Activated T-helper 1 cell treated with anti-CD3 and anti-CD28 coated beads, Interleukin-12 subunit alpha, Interleukin-12 subunit beta, Interleukin-2, Interleukin-4 antibody, amounts not matched to agents 30 ng/mL and 10 ng/mL and 1 ng/mL, durations not matched to agents 14 hours and 24 hours and 36 hours (primary cell): ENCODE measurements at regions of chr16 and their contacts with region 1.

Region 1: DNA sequence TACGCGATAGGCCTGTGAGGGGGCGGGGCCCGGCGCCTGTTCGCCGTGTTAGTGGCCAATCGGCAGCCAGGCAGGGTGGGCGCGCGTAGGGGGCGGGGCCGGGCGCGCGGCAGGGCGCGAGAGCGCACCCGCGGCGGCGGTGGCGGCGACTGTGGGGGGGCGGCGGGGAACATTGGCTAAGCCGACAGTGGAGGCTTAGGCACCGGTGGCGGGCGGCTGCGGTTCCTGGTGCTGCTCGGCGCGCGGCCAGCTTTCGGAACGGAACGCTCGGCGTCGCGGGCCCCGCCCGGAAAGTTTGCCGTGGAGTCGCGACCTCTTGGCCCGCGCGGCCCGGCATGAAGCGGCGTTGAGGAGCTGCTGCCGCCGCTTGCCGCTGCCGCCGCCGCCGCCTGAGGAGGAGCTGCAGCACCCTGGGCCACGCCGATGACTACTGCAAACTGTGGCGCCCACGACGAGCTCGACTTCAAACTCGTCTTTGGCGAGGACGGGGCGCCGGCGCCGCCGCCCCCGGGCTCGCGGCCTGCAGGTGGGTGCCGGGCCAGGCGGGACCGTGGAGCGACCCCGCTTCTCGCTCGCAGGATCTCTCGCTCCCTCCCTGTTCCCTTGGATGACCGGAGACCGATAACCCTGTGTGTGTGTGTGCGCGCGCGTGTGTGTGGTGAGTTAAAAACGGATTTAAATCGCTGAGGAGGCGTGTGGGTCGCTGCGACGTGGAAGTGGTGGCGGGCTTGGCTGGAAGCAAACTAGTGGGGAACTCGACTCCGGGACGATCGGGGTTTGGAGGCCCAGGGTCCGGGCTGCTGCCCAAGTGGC is at the start of gene NFATC3:
- DNase-seq: peak; percentile 97
- H3K4me3 Mint-ChIP-seq: peak within 1 kb of the TSS; percentile 95
- H3K27ac Mint-ChIP-seq: peak within 1 kb of the TSS; percentile 96
- H3K4me1 Mint-ChIP-seq: peaks cover 73% of the 10 kb centered on the region
- H3K27me3 Mint-ChIP-seq: no peaks in the 10 kb centered on the region
- total RNA-seq, gene NFATC3: 152 and 157 TPM in 2 replicates

Region 2: DNA sequence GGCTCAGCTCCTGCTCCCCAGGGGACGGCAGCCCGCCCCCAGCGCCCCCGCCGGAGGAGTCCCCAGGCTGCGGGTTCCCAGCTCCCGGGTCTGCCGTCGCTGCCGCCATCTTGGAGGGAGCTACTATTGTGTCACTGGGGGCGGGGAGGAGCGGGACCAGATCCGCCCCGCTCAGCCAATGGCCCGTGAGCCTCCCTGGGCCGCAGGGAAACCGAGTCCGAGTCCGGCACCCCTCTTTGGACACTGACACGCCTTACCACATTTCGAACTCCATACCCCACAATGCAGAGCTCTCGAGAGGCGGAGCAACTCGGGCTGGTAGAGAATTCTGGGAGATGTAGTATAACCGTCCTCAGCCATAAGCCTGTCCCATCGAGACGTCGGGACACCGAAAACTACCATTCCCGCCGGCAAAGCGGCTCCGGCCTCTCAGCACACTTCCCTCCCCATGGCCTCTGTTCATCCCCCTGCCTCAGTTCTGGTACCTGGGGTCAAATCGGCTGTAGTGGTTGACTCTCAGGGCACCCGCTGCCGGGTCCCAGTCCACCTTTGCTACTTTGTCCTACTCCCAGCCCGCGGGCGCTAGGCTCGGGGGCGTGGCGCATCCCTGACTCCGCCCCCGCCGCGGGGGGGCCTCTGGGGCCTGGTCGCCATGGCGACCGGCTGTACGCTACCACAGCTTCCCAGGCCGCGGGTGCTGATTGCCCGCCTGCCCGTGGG is 278.9 kb before region 1 on chr16 and contains the starts of genes RANBP10 and TSNAXIP1:
- intact Hi-C with region 1: loop called (anchors 1 kb)
- DNase-seq: peak; percentile 96
- H3K4me3 Mint-ChIP-seq: peak within 1 kb of the TSS; percentile 90
- H3K27ac Mint-ChIP-seq: peak within 1 kb of the TSS; percentile 86
- H3K4me1 Mint-ChIP-seq: peaks cover 35% of the 10 kb centered on the region
- H3K27me3 Mint-ChIP-seq: peaks cover 3% of the 10 kb centered on the region
- total RNA-seq, gene RANBP10: 23.0 and 25.7 TPM in 2 replicates
- total RNA-seq, gene TSNAXIP1: 0.52 and 0.83 TPM in 2 replicates

Region 3: GRCh38 chr16:68022704-68023522 is 62.6 kb before region 1 on chr16 and contains the starts of genes DDX28 and DUS2:
- intact Hi-C with region 1: loop called (anchors 1 kb)
- DNase-seq: peak; percentile 93
- H3K4me3 Mint-ChIP-seq: peak within 1 kb of the TSS; percentile 100
- H3K27ac Mint-ChIP-seq: peak within 1 kb of the TSS; percentile 96
- H3K4me1 Mint-ChIP-seq: peaks cover 26% of the 10 kb centered on the region
- H3K27me3 Mint-ChIP-seq: no peaks in the 10 kb centered on the region
- total RNA-seq, gene DDX28: 28.2 and 28.4 TPM in 2 replicates
- total RNA-seq, gene DUS2: 34.7 and 37.2 TPM in 2 replicates

Region 4: DNA sequence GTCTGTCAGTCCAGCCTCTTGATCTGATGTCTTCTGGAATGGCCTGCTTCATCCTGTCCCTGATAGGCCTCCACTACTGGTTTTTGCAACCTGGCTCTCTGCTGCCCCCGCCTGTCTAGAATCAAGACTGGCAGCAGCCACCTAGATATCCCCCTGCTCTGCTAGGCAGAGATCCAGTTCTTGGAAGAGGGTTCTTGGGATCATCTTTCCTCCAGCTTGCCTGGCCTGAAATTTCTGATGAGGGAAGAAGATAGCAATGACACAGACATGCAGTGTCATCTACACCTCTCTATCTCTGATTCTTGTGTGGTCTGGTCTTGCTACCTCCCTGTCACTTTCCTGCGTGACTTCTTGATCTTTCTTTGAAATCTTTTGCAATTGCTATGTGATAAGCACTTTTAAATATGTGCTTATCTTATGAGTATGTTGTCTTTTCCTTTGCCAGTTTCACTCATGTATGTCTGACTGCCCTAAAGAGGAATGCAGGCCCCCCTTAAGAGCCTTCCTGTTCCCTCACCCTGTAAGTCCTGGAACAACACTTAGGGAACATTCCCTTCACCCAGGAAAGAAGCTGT is 20.6 kb before region 1 on chr16:
- intact Hi-C with region 1: loop called (anchors 2 kb)
- DNase-seq: peak; percentile 59
- H3K4me3 Mint-ChIP-seq: no peak overlapping the region
- H3K27ac Mint-ChIP-seq: peak overlapping the region; percentile 75
- H3K4me1 Mint-ChIP-seq: peaks cover 81% of the 10 kb centered on the region
- H3K27me3 Mint-ChIP-seq: no peaks in the 10 kb centered on the region

Region 5: GRCh38 chr16:68116256-68116867 is 30.9 kb after region 1 on chr16:
- intact Hi-C with region 1: loop called (anchors 1 kb)
- DNase-seq: no peak
- H3K4me3 Mint-ChIP-seq: no peak overlapping the region
- H3K27ac Mint-ChIP-seq: peak overlapping the region; percentile 34
- H3K4me1 Mint-ChIP-seq: peaks cover 73% of the 10 kb centered on the region
- H3K27me3 Mint-ChIP-seq: no peaks in the 10 kb centered on the region

Region 6: DNA sequence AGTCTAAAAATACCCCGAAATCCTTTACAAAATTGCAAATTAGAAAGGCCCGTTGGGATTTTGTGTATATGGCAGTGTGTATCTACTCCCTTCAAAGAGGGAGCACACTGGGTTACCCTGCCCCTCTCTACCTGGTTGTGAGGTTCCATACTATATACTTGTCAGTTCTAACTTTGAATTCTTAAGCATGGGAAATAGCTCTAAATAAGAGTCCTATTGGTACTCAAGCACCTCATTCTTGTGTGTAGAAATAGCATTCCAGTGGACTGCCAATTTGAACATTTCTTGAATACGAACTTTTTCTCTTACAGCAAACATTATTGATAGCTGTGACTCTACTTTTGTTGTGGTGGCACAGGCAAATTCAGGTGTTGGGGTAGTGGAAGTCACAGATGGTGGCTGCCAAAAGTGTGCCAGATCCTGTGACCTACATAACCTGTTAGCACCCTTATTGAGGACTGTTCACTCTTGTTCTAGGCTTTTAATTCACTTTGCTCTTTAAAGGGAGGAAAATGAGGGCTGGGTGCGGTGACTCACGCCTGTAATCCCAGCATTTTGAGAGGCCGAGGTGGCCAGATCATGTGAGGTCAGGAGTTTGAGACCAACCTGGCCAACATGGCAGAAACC is 134.4 kb after region 1 on chr16:
- intact Hi-C with region 1: no loop called
- DNase-seq: no peak
- H3K4me3 Mint-ChIP-seq: no peak overlapping the region
- H3K27ac Mint-ChIP-seq: no peak overlapping the region
- H3K4me1 Mint-ChIP-seq: peaks cover under 1% of the 10 kb centered on the region
- H3K27me3 Mint-ChIP-seq: no peaks in the 10 kb centered on the region

Region 7: GRCh38 chr16:68244903-68245853 is 159.7 kb after region 1 on chr16 and contains the start of gene PLA2G15:
- intact Hi-C with region 1: loop called (anchors 1 kb)
- DNase-seq: peak; percentile 93
- H3K4me3 Mint-ChIP-seq: peak within 1 kb of the TSS; percentile 99
- H3K27ac Mint-ChIP-seq: peak within 1 kb of the TSS; percentile 82
- H3K4me1 Mint-ChIP-seq: peaks cover 18% of the 10 kb centered on the region
- H3K27me3 Mint-ChIP-seq: peaks cover 5% of the 10 kb centered on the region
- total RNA-seq, gene PLA2G15: 8.6 and 8.8 TPM in 2 replicates

Region 8: DNA sequence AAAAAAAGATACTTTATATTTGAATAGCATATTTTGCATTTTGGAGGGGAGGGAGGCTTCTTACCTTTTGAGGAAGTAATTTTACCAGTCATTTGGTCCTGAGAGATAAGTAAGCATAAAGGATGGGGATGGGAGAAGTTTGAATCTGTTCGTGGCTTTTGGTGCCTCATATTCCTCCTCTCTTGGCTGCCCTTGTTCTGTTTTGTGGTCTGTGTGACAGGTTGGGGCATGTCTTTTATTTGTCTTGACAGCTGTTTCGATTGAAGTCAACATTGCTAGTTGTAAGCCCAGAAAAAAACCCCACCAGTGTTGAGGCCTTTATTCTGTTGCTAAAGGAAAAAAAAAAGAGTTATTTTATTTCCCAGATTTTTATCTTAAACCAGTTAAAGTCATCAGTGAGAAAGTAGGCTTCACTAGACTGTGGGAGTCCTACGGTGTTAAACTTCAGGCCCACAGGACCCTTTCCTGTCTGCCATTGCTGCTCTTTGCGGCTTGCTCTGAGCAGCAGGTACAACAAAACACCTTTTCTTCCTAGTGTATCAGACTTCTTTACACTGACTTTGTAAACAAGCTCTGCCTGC is 190.2 kb after region 1 on chr16:
- intact Hi-C with region 1: no loop called
- DNase-seq: peak; percentile 40
- H3K4me3 Mint-ChIP-seq: peak overlapping the region; percentile 65
- H3K27ac Mint-ChIP-seq: peak overlapping the region; percentile 90
- H3K4me1 Mint-ChIP-seq: peaks cover 63% of the 10 kb centered on the region
- H3K27me3 Mint-ChIP-seq: no peaks in the 10 kb centered on the region

Region 9: DNA sequence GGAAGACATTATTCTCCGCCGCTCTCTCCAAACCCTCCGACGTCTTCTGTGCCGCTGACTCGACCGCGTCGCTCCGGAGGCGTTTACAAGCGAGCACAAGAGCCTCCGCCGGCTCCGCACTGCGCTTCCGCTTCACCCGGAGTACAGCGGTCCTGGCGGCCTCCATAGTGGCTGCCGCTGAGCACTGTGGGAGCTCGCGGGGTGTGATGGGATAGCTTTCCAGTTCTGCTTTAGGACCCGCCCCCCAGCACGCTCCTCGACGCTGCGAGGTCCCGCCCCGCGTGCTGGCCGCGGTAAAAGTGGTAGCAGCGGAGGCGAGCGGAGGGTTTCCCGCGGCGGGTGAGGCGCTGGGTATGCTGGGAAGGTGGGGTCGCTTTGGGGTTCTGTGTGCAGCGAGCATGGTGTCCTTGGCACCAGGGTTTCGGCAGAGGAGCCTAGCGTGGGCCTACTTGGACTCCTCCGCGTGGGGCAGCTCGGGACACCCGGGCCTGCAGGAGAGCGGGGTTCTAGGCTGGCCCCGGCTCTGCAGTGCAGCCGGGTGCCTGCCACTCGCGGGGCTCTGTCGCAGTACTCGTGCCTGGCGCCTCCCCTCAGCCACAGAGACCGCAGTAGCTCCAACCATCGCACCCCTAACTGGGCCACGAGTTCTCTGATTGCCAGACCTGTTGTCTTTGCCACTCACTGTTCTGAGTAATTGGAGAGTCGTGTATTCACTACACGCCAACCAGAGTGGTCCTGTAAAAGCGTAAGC is 225.5 kb after region 1 on chr16 and contains the starts of genes PRMT7 and SLC7A6OS:
- intact Hi-C with region 1: loop called (anchors 2 kb)
- DNase-seq: peak; percentile 92
- H3K4me3 Mint-ChIP-seq: peak within 1 kb of the TSS; percentile 99
- H3K27ac Mint-ChIP-seq: peak within 1 kb of the TSS; percentile 98
- H3K4me1 Mint-ChIP-seq: peaks cover 43% of the 10 kb centered on the region
- H3K27me3 Mint-ChIP-seq: no peaks in the 10 kb centered on the region
- total RNA-seq, gene PRMT7: 80.6 and 85.2 TPM in 2 replicates
- total RNA-seq, gene SLC7A6OS: 26.5 and 27.6 TPM in 2 replicates